ENCODE measurements at regions of chr20 and their contacts with region 1.

Region 1: GRCh38 chr20:39123185-39123557 is 161.0 kb downstream of the DHX35 start:
- DNase-seq: no peak
- H3K4me3 ChIP-seq: no peak overlapping the region
- H3K27ac ChIP-seq: no peak overlapping the region
- H3K4me1 ChIP-seq: peaks cover 0 to 8% (median 0%) of the 10 kb centered on the region in 4 experiments
- H3K27me3 ChIP-seq: peaks cover 0 to 6% (median 0%) of the 10 kb centered on the region in 5 experiments

Region 2: GRCh38 chr20:38973645-38974044 is 149.5 kb before region 1 on chr20:
- CTCF ChIA-PET with region 1: no interaction called
- POLR2A ChIA-PET with region 1: no interaction called
- DNase-seq: no peak
- H3K4me3 ChIP-seq: no peak overlapping the region
- H3K27ac ChIP-seq: no peak overlapping the region
- H3K4me1 ChIP-seq: no peaks in the 10 kb centered on the region
- H3K27me3 ChIP-seq: no peaks in the 10 kb centered on the region

Region 3: GRCh38 chr20:39112178-39112743 is 10.9 kb before region 1 on chr20:
- CTCF ChIA-PET with region 1: interaction called, 13 read pairs
- POLR2A ChIA-PET with region 1: no interaction called
- DNase-seq: peak; percentile 23 to 54 (median 41)
- H3K4me3 ChIP-seq: no peak overlapping the region
- H3K27ac ChIP-seq: no peak overlapping the region
- H3K4me1 ChIP-seq: peaks cover 0 to 3% (median 0%) of the 10 kb centered on the region in 4 experiments
- H3K27me3 ChIP-seq: peaks cover 0 to 37% (median 8%) of the 10 kb centered on the region in 5 experiments